ENCODE measurements at regions of chr3 and their contacts with region 1.

Region 1: DNA sequence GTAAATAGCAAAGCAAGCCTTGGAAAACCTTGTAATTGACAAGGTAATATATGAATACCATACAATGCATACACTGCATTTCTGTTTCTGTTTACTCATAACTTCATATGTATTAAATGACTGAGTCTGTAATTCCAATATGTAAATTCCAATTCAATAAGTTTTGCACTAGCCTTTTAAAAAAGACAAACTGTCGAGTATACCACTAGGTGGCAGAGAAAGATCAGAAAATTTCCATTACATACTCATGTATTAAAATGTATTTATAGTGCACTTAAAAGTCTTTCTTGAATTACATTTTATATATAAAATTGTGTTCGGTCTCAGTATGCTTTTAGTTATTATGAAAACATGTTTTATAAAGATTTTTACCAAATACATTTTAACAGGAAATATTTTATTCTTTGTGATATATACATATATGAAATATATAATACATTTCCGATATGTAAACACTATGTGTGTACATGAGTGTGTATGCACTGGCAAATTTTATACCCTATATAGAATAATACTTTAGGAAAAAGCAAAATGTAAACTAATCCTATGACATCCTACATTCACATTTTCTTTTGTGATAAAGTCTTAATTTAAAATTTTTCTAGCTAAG is 216.8 kb downstream of the VGLL3 start:
- DNase-seq: no peak
- H3K4me3 ChIP-seq: no peak overlapping the region
- H3K27ac ChIP-seq: no peak overlapping the region
- H3K4me1 ChIP-seq: no peaks in the 10 kb centered on the region
- H3K27me3 ChIP-seq: no peaks in the 10 kb centered on the region
- CTCF ChIP-seq: peak in 2 of 3 donors; percentile 29 to 35
- EP300 ChIP-seq: no peak
- POLR2A ChIP-seq: no peak

Region 2: GRCh38 chr3:86826292-86826691 is 52.1 kb after region 1 on chr3:
- intact Hi-C with region 1: no loop called
- DNase-seq: no peak
- H3K4me3 ChIP-seq: no peak overlapping the region
- H3K27ac ChIP-seq: no peak overlapping the region
- H3K4me1 ChIP-seq: no peaks in the 10 kb centered on the region
- H3K27me3 ChIP-seq: no peaks in the 10 kb centered on the region
- CTCF ChIP-seq: no peak
- EP300 ChIP-seq: no peak
- POLR2A ChIP-seq: no peak

Region 3: GRCh38 chr3:86890741-86891396 is 116.7 kb after region 1 on chr3:
- intact Hi-C with region 1: no loop called
- DNase-seq: no peak
- H3K4me3 ChIP-seq: no peak overlapping the region
- H3K27ac ChIP-seq: no peak overlapping the region
- H3K4me1 ChIP-seq: no peaks in the 10 kb centered on the region
- H3K27me3 ChIP-seq: no peaks in the 10 kb centered on the region
- CTCF ChIP-seq: no peak
- EP300 ChIP-seq: no peak
- POLR2A ChIP-seq: no peak

Region 4: GRCh38 chr3:87076946-87077345 is 302.8 kb after region 1 on chr3:
- intact Hi-C with region 1: loop called (anchors 5 to 10 kb)
- DNase-seq: no peak
- H3K4me3 ChIP-seq: no peak overlapping the region
- H3K27ac ChIP-seq: no peak overlapping the region
- H3K4me1 ChIP-seq: no peaks in the 10 kb centered on the region
- H3K27me3 ChIP-seq: no peaks in the 10 kb centered on the region
- CTCF ChIP-seq: no peak
- EP300 ChIP-seq: no peak
- POLR2A ChIP-seq: no peak

Region 5: DNA sequence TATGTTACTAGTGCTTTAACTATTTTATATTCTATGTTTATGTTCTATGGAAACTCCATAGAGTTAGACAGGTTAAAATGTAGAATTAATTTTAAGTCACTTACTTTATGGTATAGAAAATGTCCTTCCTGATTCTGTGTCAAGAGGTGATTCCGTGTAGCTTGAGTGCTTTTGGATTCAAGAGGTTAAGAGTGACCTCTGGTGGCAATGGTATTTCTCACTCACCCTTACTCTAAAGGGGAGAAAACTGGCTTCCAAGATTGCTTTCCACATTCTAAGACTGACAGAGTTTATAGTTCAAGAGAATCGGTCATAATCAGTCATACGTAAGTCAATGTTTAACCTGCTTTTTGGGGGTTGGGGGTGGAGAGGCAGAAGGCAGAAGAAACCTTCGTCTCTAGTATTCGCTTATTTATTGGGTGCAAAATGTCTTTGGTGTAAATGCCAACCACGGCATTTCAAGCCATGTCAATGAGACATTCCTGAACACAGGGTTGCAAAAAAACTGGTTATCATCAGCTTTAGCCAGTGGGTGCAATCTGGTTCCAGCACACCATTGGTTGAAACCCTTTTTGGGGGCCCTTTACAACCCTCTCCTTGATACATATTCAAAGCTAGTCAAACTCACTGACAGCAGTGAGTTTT is 308.7 kb after region 1 on chr3:
- intact Hi-C with region 1: loop called (anchors 5 to 10 kb)
- DNase-seq: peak in 1 of 5 donors; percentile 20
- H3K4me3 ChIP-seq: no peak overlapping the region
- H3K27ac ChIP-seq: no peak overlapping the region
- H3K4me1 ChIP-seq: no peaks in the 10 kb centered on the region
- H3K27me3 ChIP-seq: no peaks in the 10 kb centered on the region
- CTCF ChIP-seq: peak; percentile 38 to 52 (median 43)
- EP300 ChIP-seq: no peak
- POLR2A ChIP-seq: no peak

Region 6: DNA sequence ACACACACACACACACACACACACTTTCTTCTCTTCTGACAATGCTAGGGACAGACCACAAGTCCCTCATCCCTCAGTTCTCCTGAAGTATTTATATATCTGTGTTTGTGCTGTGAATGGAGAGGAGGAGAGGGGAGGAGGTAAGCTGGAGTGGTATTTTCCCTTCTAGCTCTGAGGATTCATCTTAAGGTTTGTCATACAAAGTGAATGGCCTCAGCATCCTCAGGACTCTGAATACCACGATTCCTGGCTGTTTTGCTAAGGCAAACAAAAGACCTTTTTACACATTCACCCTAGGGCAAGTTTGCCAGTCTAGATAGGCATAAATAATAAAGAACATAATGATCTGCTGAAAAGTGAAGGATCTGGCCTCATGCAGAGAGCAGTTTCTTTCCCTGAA is 387.2 kb after region 1 on chr3:
- intact Hi-C with region 1: loop called in 3 of 4 experiments (anchors 5 to 10 kb)
- DNase-seq: no peak
- H3K4me3 ChIP-seq: no peak overlapping the region
- H3K27ac ChIP-seq: no peak overlapping the region
- H3K4me1 ChIP-seq: no peaks in the 10 kb centered on the region
- H3K27me3 ChIP-seq: no peaks in the 10 kb centered on the region
- CTCF ChIP-seq: no peak
- EP300 ChIP-seq: no peak
- POLR2A ChIP-seq: no peak

Region 7: DNA sequence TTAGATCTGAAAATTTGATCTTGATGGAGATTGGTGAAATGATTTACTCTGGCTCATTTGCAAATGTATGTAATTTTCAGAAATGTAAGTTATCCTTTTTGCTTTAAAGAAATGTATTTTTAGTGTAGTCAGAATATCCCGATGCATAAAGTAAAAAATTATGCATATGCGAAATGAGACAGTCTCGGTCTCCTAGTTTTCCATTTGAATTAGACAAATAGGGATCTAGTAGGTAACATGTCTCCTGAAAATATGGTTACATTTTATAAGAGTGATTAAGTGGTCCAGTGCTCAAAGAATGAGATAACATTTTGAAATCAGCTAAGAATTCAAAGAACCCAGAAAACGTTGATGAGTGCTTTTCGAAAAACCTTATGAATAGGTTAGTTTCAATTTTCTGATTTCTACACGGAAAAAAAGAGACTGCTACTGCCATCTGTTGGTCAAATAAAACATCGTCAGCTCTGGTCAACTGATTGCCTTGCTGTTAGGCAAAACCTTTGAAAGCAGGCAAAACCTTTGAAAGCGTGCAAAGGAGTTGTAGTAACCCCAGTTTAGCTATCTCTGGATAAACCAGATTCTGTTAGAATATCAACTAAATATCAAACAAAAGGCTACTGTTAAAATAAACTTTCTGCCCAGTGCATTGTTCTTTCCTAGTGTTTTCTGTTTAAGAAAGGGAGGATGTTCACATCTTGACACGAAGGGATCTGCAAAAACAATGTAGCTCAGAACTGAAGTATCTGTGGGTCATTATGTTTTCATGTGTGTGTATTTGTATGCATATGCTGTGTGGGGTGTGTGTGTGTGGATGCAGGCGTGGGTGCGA is 393.7 kb after region 1 on chr3:
- intact Hi-C with region 1: loop called (anchors 5 to 10 kb)
- DNase-seq: peak in 1 of 5 donors; percentile 35
- H3K4me3 ChIP-seq: peak overlapping the region; percentile 34
- H3K27ac ChIP-seq: no peak overlapping the region
- H3K4me1 ChIP-seq: no peaks in the 10 kb centered on the region
- H3K27me3 ChIP-seq: no peaks in the 10 kb centered on the region
- CTCF ChIP-seq: peak; percentile 11 to 38 (median 33)
- EP300 ChIP-seq: no peak
- POLR2A ChIP-seq: no peak

Region 8: GRCh38 chr3:87173776-87174175 is 399.6 kb after region 1 on chr3:
- intact Hi-C with region 1: loop called in 3 of 4 experiments (anchors 10 kb)
- DNase-seq: no peak
- H3K4me3 ChIP-seq: no peak overlapping the region
- H3K27ac ChIP-seq: no peak overlapping the region
- H3K4me1 ChIP-seq: no peaks in the 10 kb centered on the region
- H3K27me3 ChIP-seq: no peaks in the 10 kb centered on the region
- CTCF ChIP-seq: no peak
- EP300 ChIP-seq: no peak
- POLR2A ChIP-seq: no peak

Measured in ovary (tissue), 10 donors.